GM10248 (cell line): ENCODE measurements at regions of chr16 and their contacts with region 1.

Region 1: GRCh38 chr16:15874745-15875314 is 13.6 kb downstream of the CEP20 start:
- DNase-seq: no peak
- CTCF ChIP-seq: peak; percentile 58

Region 2: GRCh38 chr16:15843635-15844279 is 31.1 kb before region 1 on chr16:
- CTCF ChIA-PET with region 1: no interaction called
- POLR2A ChIA-PET with region 1: no interaction called
- DNase-seq: no peak
- CTCF ChIP-seq: no peak

Region 3: GRCh38 chr16:15857724-15858560 is 16.9 kb before region 1 on chr16:
- CTCF ChIA-PET with region 1: interaction called, 12 read pairs
- POLR2A ChIA-PET with region 1: no interaction called
- DNase-seq: peak; percentile 27
- CTCF ChIP-seq: no peak

Region 4: DNA sequence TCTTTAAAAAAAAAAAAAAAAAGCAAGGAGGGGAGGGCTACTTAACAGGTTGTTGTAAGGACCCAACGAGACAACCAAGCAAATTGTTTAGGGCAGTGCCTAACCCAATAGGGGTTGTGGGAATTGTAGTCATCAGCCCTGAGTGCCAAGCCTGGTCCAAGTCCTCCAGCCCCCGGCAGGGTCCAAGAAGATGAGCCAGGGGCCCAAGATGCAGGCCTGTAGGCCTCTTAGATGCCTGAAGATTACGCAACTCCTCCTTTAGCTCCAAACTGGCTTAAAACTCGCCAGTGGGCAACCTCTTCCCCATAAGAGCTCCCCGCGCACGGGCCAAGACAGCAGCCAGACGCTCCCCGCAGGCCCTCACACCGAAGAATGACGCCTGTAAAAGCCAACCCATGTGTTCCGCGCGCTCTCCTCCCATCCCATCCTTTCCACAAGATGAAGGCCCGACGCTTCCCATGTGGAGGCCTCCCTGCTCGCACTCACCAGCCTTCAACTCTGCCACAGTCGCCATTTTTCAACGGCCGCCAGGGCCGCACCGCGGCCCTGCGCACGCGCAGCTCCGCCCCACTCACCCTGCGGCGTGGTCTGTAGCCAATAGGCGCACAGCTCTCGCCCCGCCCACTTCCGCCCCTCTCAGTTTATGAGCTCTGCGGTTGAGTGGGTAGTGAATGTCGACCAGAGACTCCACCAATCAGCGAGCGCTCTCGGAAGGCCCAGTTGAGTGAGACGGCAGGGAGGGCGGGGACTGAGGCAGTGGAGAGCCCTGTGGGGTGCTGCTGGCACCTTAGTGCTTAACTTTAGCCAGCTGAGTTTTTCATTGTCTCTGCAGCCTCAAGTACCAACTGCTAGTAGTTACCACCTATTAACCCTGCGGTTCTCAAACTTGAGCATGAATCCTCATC is 13.5 kb after region 1 on chr16 and contains the start of gene CEP20:
- CTCF ChIA-PET with region 1: interaction called, 50 read pairs
- POLR2A ChIA-PET with region 1: interaction called, 4 read pairs
- DNase-seq: peak; percentile 100
- CTCF ChIP-seq: no peak

Region 5: DNA sequence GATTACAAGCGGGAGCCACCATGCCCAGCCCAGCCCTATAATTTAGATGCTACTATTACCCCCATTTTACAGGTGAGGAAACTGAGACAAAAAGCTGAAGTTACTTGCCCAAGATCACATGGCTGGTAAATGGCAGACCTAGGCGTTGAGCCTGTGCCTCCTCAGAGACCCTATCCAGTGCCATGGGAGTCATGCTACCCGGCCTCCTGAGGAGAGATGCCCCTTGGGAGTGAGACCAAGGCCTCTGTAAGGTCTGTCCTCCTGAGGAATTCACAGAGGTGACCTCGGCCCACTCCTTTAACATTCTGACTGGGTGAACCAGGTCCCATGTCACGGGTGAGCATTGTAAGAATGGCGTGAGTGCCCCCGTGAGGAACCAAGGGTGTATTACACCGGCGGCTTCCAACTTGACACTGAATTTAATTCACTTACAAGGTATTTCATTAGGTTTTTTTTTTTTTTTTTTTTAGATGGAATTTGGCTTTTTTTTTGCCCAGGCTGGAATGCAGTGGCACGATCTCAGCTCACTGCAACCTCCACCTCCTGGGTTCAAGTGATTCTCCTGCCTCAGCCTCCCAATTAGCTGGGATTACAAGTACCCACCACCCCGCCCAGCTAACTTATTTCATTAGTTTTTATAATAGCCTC is 252.8 kb after region 1 on chr16:
- CTCF ChIA-PET with region 1: interaction called, 12 read pairs
- POLR2A ChIA-PET with region 1: no interaction called
- DNase-seq: peak; percentile 79
- CTCF ChIP-seq: peak; percentile 77